MCF 10A (cell line): ENCODE measurements at regions of chr12 and their contacts with region 1.

Region 1: GRCh38 chr12:54337280-54337842 is 12.4 kb downstream of the COPZ1 start:
- DNase-seq: no peak
- H3K4me3 Mint-ChIP-seq: no peak overlapping the region
- H3K27ac Mint-ChIP-seq: no peak overlapping the region
- H3K4me1 Mint-ChIP-seq: peaks cover 13% of the 10 kb centered on the region
- H3K27me3 Mint-ChIP-seq: no peaks in the 10 kb centered on the region
- CTCF ChIP-seq: no peak

Region 2: GRCh38 chr12:54251667-54252284 is 85.6 kb before region 1 on chr12:
- CTCF ChIA-PET with region 1: interaction called, 24 read pairs
- POLR2A ChIA-PET with region 1: no interaction called
- intact Hi-C with region 1: no loop called
- DNase-seq: peak; percentile 58
- H3K4me3 Mint-ChIP-seq: no peak overlapping the region
- H3K27ac Mint-ChIP-seq: peak overlapping the region; percentile 69
- H3K4me1 Mint-ChIP-seq: no peaks in the 10 kb centered on the region
- H3K27me3 Mint-ChIP-seq: no peaks in the 10 kb centered on the region
- CTCF ChIP-seq: peak; percentile 68

Region 3: GRCh38 chr12:54294152-54294952 is 43.0 kb before region 1 on chr12:
- CTCF ChIA-PET with region 1: interaction called, 38 read pairs
- POLR2A ChIA-PET with region 1: no interaction called
- intact Hi-C with region 1: no loop called
- DNase-seq: peak; percentile 63
- H3K4me3 Mint-ChIP-seq: no peak overlapping the region
- H3K27ac Mint-ChIP-seq: no peak overlapping the region
- H3K4me1 Mint-ChIP-seq: peaks cover 7% of the 10 kb centered on the region
- H3K27me3 Mint-ChIP-seq: no peaks in the 10 kb centered on the region
- CTCF ChIP-seq: peak; percentile 81

Region 4: DNA sequence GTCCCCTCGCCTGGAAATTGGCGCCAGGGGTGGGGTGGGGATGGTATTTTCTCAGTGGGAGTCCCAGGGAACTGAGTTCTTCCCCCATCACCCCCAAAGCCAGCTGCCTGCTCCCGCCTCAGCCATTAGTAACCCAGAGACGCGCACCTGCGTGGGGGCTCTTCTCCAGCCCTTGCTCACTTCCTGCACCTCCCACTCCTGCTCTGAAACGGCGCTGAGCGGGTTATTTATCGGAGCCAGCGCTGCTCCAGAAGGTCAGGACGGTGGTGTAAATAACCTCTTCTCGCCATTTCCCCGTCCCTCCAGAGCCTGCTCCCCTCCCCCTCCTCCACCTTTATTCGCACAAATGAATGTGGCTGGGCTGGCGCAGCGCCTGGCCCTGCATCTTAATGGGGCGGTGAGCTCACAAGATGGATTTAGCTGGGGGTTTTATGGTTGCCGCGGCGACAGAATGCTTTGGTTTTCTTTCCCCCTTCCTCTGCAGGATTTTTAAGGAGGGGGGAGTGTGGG is 14.7 kb after region 1 on chr12:
- CTCF ChIA-PET with region 1: interaction called, 23 read pairs
- POLR2A ChIA-PET with region 1: interaction called, 6 read pairs
- intact Hi-C with region 1: no loop called
- DNase-seq: no peak
- H3K4me3 Mint-ChIP-seq: no peak overlapping the region
- H3K27ac Mint-ChIP-seq: no peak overlapping the region
- H3K4me1 Mint-ChIP-seq: peaks cover 22% of the 10 kb centered on the region
- H3K27me3 Mint-ChIP-seq: no peaks in the 10 kb centered on the region
- CTCF ChIP-seq: no peak

Region 5: DNA sequence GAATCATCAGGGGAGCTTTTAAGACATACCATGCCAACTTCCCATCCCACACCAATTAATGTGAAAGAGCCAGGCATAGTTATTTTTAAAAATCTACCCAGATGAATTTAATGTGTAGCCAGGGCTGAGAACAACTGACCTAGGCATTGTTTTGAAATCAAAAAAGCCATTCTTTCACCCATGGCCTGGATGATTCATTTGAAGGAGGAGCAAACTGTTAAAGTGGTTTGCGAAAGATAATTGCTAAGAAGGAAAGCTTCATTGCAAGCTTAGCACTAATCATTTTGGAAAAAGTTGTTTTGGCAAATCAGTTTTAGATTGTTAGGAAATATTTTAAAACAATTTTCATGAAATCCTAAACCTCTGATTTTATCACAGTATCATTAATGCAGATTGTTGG is 138.2 kb after region 1 on chr12:
- CTCF ChIA-PET with region 1: no interaction called
- POLR2A ChIA-PET with region 1: no interaction called
- intact Hi-C with region 1: no loop called
- DNase-seq: peak; percentile 69
- H3K4me3 Mint-ChIP-seq: no peak overlapping the region
- H3K27ac Mint-ChIP-seq: no peak overlapping the region
- H3K4me1 Mint-ChIP-seq: no peaks in the 10 kb centered on the region
- H3K27me3 Mint-ChIP-seq: no peaks in the 10 kb centered on the region
- CTCF ChIP-seq: no peak